ENCODE measurements at regions of chr17 and their contacts with region 1.

Region 1: GRCh38 chr17:1752425-1753262 is 9.2 kb upstream of the SERPINF1 start:
- DNase-seq: peak in 1 of 4 experiments; percentile 18
- ATAC-seq: peak; percentile 24; the same call in 2 of the 3 replicates
- H3K4me3 ChIP-seq: no peak overlapping the region
- H3K27ac ChIP-seq: no peak overlapping the region
- H3K4me1 ChIP-seq: peaks cover 8 to 38% of the 10 kb centered on the region in 2 experiments; a peak in 4 of 5 replicates
- H3K27me3 ChIP-seq: no peaks in the 10 kb centered on the region
- CTCF ChIP-seq: no peak
- EP300 ChIP-seq: no peak
- POLR2A ChIP-seq: no peak
- RAD21 ChIP-seq: no peak

Region 2: DNA sequence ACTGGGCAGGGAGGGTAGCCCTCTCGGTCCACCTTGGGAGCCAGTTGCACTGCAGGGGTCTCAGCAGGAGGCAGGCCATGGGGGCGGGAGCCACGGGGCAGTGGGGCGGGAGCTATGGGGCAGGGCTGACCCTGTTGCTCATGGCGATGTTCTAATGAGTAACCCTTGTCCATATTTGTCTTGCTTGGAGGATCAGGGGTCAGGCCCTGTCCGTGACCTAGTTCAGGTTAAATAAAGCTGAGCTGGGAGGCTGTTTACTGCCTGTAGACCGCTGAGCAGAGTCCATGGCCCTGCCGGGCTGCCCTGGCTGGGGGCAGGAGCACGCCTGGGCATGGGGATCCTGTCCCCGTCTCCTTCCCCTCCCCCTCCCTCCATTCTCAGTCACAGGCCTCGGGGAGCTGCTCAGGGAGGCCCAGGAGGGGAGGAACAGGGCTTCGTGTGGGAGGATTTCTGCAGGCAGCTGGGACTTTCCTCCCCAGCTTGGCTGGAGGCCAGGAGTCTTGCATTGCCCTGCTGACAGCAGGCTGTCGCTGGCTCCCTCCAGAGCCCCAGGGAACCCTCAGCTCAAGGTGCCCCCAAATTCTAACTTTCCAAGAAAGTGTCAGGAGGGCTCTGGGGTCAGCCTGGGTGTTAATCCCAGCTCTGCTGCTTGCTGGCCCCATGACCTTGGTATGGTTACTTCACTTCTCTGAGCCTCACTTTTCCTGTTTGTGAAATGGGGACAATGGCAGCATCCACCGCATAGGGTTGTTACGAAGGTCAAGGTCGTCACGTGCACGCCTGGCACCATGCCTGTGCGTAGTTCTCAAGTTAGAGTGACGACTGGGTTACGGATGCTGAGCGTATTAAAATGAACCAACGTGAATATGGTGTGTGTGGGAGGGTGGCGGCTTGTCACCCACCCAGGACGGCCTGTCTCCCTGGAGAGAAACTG is 16.0 kb before region 1 on chr17:
- CTCF ChIA-PET with region 1: no interaction called
- POLR2A ChIA-PET with region 1: no interaction called
- in situ Hi-C with region 1: no loop called
- intact Hi-C with region 1: no loop called
- DNase-seq: peak; percentile 78 to 89 (median 80)
- ATAC-seq: peak; percentile 94
- H3K4me3 ChIP-seq: no peak overlapping the region
- H3K27ac ChIP-seq: peak overlapping the region; percentile 53; the same call in 2 of the 3 replicates
- H3K4me1 ChIP-seq: peaks cover 7 to 50% of the 10 kb centered on the region in 2 experiments
- H3K27me3 ChIP-seq: peaks cover 0 to 3% of the 10 kb centered on the region in 2 experiments; a peak in 1 of 5 replicates
- CTCF ChIP-seq: no peak
- EP300 ChIP-seq: 0 out of 2 replicates have a peak, but pooled peaks have one; percentile 25
- POLR2A ChIP-seq: no peak
- RAD21 ChIP-seq: no peak

Region 3: GRCh38 chr17:1764284-1764683 is 11.6 kb after region 1 on chr17:
- CTCF ChIA-PET with region 1: no interaction called
- POLR2A ChIA-PET with region 1: interaction called, 10 read pairs
- in situ Hi-C with region 1: no loop called
- intact Hi-C with region 1: no loop called
- DNase-seq: peak in 1 of 4 experiments; percentile 20
- ATAC-seq: no peak
- H3K4me3 ChIP-seq: no peak overlapping the region
- H3K27ac ChIP-seq: 0 out of 3 replicates have a peak overlapping the region, but pooled peaks have one; percentile 28
- H3K4me1 ChIP-seq: peaks cover 21 to 34% of the 10 kb centered on the region in 2 experiments; a peak in 4 of 5 replicates
- H3K27me3 ChIP-seq: no peaks in the 10 kb centered on the region
- CTCF ChIP-seq: no peak
- EP300 ChIP-seq: no peak
- POLR2A ChIP-seq: no peak
- RAD21 ChIP-seq: no peak

Measured in K562 (cell line).